Caco-2 (cell line): ENCODE measurements at regions of chr11 and their contacts with region 1.

Region 1: DNA sequence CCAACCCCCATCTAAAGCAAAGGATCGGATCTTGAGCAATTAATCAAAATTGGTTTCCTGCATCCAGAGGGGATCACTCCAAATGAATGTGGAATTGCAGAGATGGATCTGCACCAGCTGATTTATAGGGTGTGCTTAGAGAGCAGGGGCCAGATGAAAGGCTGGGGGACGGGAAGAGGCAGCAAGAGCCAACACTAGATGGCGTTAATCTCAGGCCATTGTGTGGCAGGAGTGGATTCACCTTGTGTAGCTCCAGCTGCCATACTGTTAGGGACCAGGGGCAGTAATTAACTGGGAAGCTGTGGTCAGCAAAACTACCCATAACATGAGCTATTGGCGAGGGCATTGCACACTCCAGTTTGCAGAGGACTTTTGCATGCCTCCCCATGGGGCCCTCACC is 35.6 kb downstream of the SERPINH1 start:
- DNase-seq: peak; percentile 76 to 80
- H3K4me3 ChIP-seq: no peak overlapping the region
- H3K4me3 Mint-ChIP-seq: no peak overlapping the region
- H3K27ac Mint-ChIP-seq: no peak overlapping the region
- H3K4me1 ChIP-seq: peaks cover 10% of the 10 kb centered on the region
- H3K4me1 Mint-ChIP-seq: peaks cover 9% of the 10 kb centered on the region
- H3K27me3 ChIP-seq: no peaks in the 10 kb centered on the region
- H3K27me3 Mint-ChIP-seq: no peaks in the 10 kb centered on the region
- CTCF ChIP-seq: peak; percentile 87 to 90

Region 2: DNA sequence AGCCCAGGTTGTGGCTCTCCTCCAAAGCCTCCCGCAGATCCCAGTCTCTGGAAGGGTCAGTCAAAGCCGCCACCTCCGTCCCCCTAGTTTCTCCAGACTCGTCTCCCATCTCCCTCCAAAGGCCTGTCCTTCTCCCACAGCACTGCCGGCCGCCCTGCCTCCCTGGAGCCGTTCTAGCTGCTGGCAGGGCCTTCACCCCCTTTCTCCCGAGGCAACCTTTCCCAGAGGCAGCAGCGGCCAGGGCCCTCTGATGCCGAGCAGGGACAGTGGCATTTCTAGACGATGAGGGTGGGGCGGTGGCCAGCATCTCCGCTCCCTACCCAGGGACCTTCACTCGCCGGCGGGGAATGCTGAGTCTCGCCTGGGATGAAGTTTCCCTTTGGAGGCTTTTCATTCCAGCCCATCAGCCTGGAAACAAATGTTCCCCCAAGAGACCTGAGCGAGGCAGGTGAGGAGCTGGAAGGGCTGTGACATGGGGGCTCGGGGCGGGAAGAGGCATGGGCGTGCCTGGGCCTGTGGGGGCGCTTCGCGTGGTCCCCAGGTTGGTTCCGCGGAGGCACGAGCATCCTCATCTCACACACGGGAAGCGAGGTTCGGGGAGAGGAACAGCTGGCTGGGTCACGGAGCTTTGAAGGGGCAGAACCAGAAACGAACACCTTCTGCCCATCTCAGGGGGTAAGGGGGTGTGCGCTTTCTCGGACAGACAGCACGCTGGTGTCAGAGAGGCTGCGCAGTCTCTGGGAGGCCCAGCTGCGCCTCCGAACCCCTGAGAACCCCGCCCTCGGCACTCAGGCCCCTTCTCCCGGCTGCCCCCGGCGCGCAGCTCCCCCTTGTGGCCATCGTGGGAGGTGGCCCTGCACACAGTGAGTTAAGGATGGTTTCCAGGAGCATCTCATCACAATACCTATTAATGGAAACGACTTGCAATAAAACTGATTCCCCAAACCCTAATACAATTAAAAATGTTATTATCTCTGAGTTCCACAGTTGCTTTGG is 146.5 kb before region 1 on chr11:
- CTCF ChIA-PET with region 1: no interaction called
- POLR2A ChIA-PET with region 1: no interaction called
- intact Hi-C with region 1: no loop called
- DNase-seq: peak in 1 of 2 experiments; percentile 79
- H3K4me3 ChIP-seq: no peak overlapping the region
- H3K4me3 Mint-ChIP-seq: no peak overlapping the region
- H3K27ac Mint-ChIP-seq: no peak overlapping the region
- H3K4me1 ChIP-seq: no peaks in the 10 kb centered on the region
- H3K4me1 Mint-ChIP-seq: no peaks in the 10 kb centered on the region
- H3K27me3 ChIP-seq: no peaks in the 10 kb centered on the region
- H3K27me3 Mint-ChIP-seq: no peaks in the 10 kb centered on the region
- CTCF ChIP-seq: peak; percentile 93 to 98

Region 3: GRCh38 chr11:75547580-75548058 is 50.0 kb before region 1 on chr11:
- CTCF ChIA-PET with region 1: no interaction called
- POLR2A ChIA-PET with region 1: no interaction called
- intact Hi-C with region 1: loop called (anchors 1 kb)
- DNase-seq: peak; percentile 89 to 90
- H3K4me3 ChIP-seq: no peak overlapping the region
- H3K4me3 Mint-ChIP-seq: no peak overlapping the region
- H3K27ac Mint-ChIP-seq: peak overlapping the region; percentile 82
- H3K4me1 ChIP-seq: peaks cover 7% of the 10 kb centered on the region
- H3K4me1 Mint-ChIP-seq: peaks cover 16% of the 10 kb centered on the region
- H3K27me3 ChIP-seq: no peaks in the 10 kb centered on the region
- H3K27me3 Mint-ChIP-seq: no peaks in the 10 kb centered on the region
- CTCF ChIP-seq: peak; percentile 96 to 99

Region 4: DNA sequence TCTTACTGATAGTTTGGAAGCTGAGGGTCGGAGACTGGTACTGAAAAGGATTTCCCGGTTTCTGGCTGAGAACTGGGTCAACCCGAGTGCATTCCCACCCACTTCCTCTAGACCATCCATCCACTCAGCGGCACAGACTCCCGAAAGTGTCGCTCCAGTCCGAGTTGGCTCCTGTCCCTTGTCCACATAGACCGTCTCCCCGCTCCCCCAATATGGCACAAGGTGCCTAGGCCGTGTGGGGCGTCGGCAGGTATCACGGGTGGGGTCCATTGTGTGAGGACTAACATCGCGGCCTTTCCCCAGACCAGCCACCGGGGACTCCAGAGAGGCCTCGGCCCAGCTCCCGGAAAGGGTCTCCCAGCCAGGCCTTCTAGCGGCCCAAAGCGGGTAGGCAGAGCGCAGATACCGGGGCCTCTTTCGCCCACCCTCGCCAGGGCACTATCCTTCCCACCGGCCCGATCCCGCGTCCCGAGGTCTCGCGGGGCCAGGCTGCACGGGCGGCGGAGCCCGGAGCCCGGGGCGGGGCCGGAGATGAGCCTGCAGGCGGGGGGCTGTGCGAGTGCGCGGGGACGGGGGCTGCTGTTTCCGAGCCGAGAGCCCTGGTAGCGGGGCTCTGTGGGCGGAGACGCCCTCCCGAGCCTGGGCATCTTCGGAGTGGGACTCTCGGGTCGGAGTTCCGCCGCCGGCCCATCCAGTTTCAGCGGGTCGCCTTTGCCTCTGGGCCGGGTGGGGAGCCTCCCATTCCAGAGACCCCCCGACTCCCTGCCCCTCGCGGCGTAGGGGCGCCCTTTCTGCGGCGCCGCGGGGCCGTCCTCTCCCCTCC is 14.5 kb before region 1 on chr11:
- CTCF ChIA-PET with region 1: interaction called, 19 read pairs
- POLR2A ChIA-PET with region 1: interaction called, 4 read pairs
- intact Hi-C with region 1: no loop called
- DNase-seq: peak; percentile 90 to 93
- H3K4me3 ChIP-seq: peak overlapping the region; percentile 75
- H3K4me3 Mint-ChIP-seq: peak overlapping the region; percentile 79
- H3K27ac Mint-ChIP-seq: peak overlapping the region; percentile 78
- H3K4me1 ChIP-seq: peaks cover 15% of the 10 kb centered on the region
- H3K4me1 Mint-ChIP-seq: peaks cover 21% of the 10 kb centered on the region
- H3K27me3 ChIP-seq: no peaks in the 10 kb centered on the region
- H3K27me3 Mint-ChIP-seq: no peaks in the 10 kb centered on the region
- CTCF ChIP-seq: peak; percentile 50 to 58

Region 5: DNA sequence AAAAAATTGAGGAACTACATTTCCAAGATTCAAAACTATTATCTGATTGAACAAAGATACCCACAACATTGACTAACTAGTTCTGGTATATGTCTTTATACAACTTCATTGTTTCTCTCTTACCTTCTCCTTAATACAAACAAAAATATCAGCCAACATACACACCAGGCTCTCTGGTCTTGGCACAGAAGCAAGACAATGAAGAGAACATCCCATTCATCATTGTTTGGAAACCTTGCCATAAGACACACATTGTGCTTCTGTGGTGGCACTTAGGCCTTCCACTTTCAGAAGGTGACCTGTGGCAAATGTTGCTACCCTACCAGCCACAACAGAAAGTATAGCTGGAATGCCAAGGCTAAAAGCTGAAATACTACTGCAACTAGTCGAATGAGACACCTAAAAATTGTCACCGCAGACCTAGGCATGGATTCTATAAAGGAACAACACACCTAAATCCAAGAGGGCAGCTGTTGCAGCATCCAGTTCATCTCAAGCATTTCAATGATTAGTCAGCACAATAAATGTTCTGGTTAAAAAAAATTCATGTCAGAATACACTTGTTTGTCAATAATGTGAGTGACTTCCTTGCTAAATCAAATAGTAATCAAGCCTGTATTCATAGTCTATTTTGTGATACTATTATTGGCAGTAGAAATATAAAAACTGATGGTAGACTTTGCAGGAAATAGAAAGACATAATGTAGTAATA is 44.9 kb after region 1 on chr11:
- CTCF ChIA-PET with region 1: interaction called, 6 read pairs
- POLR2A ChIA-PET with region 1: no interaction called
- intact Hi-C with region 1: loop called (anchors 5 kb)
- DNase-seq: no peak
- H3K4me3 ChIP-seq: no peak overlapping the region
- H3K4me3 Mint-ChIP-seq: no peak overlapping the region
- H3K27ac Mint-ChIP-seq: no peak overlapping the region
- H3K4me1 ChIP-seq: peaks cover 62% of the 10 kb centered on the region
- H3K4me1 Mint-ChIP-seq: peaks cover 48% of the 10 kb centered on the region
- H3K27me3 ChIP-seq: no peaks in the 10 kb centered on the region
- H3K27me3 Mint-ChIP-seq: no peaks in the 10 kb centered on the region
- CTCF ChIP-seq: no peak

Region 6: GRCh38 chr11:75667831-75668450 is 70.3 kb after region 1 on chr11:
- CTCF ChIA-PET with region 1: interaction called, 27 read pairs
- POLR2A ChIA-PET with region 1: no interaction called
- intact Hi-C with region 1: loop called (anchors 1 kb)
- DNase-seq: peak; percentile 85 to 90
- H3K4me3 ChIP-seq: peak overlapping the region; percentile 69
- H3K4me3 Mint-ChIP-seq: peak overlapping the region; percentile 82
- H3K27ac Mint-ChIP-seq: peak overlapping the region; percentile 68
- H3K4me1 ChIP-seq: peaks cover 42% of the 10 kb centered on the region
- H3K4me1 Mint-ChIP-seq: peaks cover 33% of the 10 kb centered on the region
- H3K27me3 ChIP-seq: no peaks in the 10 kb centered on the region
- H3K27me3 Mint-ChIP-seq: no peaks in the 10 kb centered on the region
- CTCF ChIP-seq: no peak

Region 7: GRCh38 chr11:75718419-75719339 is 121.0 kb after region 1 on chr11:
- CTCF ChIA-PET with region 1: interaction called, 6 read pairs
- POLR2A ChIA-PET with region 1: no interaction called
- intact Hi-C with region 1: loop called (anchors 2 kb)
- DNase-seq: no peak
- H3K4me3 ChIP-seq: no peak overlapping the region
- H3K4me3 Mint-ChIP-seq: no peak overlapping the region
- H3K27ac Mint-ChIP-seq: peak overlapping the region; percentile 65
- H3K4me1 ChIP-seq: peaks cover 28% of the 10 kb centered on the region
- H3K4me1 Mint-ChIP-seq: peaks cover 18% of the 10 kb centered on the region
- H3K27me3 ChIP-seq: no peaks in the 10 kb centered on the region
- H3K27me3 Mint-ChIP-seq: no peaks in the 10 kb centered on the region
- CTCF ChIP-seq: no peak